Activated CD4-positive, alpha-beta T cell treated with anti-CD3 and anti-CD28 coated beads, Interleukin-2, amount 10 ng/mL, durations not matched to agents 24 days and 14 days (primary cell): ENCODE measurements at regions of chr1 and their contacts with region 1.

Region 1: DNA sequence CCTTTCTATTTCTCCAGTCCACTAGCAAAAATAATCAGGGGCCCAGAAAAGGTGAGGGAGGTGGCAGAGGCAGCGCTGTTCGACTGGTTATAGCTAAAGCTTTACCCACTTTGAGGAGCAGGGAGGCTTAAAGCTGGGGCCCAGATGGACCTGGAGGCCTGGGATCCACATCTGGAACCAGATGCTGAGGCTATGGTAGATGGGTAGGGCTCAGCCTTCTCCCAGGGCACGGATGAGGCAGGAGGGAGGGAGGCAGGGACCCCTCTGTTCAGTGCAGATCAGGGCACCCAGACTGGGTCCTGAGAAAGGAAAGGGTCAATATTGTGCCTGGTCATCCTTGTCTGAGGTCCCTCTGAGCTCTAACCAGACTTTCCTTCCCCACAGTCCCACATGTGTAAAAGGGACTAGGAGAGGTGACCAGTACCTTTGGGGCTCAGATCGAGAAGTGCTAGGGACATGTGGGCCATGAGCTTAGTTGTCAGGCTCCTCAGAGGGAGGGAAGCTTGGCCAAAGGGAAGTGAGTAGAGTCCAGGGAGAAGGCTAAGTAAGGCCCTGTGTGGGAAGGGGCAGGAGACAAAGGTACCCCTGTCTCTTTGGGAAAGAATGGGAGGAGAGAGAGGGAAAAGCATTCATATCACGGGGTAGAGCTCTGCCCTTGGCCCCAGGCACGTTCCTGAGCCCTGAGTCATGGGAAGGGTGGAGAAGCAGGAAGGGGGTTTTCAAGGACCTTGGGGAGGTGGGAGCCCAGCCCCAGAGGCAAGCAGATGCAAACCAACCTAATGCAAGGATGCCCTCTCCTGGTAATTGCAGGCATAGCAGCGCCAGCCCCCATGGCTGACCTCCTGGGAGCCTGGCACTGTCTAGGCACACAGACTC is 15.4 kb downstream of the LMNA start:
- DNase-seq: peak; percentile 94
- H3K4me3 Mint-ChIP-seq: no peak overlapping the region
- H3K27ac Mint-ChIP-seq: peak overlapping the region; percentile 64
- H3K4me1 Mint-ChIP-seq: peaks cover 42% of the 10 kb centered on the region
- H3K27me3 Mint-ChIP-seq: peaks cover 4% of the 10 kb centered on the region

Region 2: GRCh38 chr1:155989242-155990004 is 140.5 kb before region 1 on chr1:
- intact Hi-C with region 1: no loop called
- DNase-seq: peak; percentile 95
- H3K4me3 Mint-ChIP-seq: no peak overlapping the region
- H3K27ac Mint-ChIP-seq: no peak overlapping the region
- H3K4me1 Mint-ChIP-seq: peaks cover 16% of the 10 kb centered on the region
- H3K27me3 Mint-ChIP-seq: no peaks in the 10 kb centered on the region

Region 3: GRCh38 chr1:156090822-156091188 is 39.1 kb before region 1 on chr1:
- intact Hi-C with region 1: loop called (anchors 1 kb)
- DNase-seq: peak; percentile 95
- H3K4me3 Mint-ChIP-seq: no peak overlapping the region
- H3K27ac Mint-ChIP-seq: no peak overlapping the region
- H3K4me1 Mint-ChIP-seq: peaks cover 5% of the 10 kb centered on the region
- H3K27me3 Mint-ChIP-seq: peaks cover 41% of the 10 kb centered on the region

Region 4: GRCh38 chr1:156096640-156097391 is 33.1 kb before region 1 on chr1:
- intact Hi-C with region 1: loop called (anchors 1 kb)
- DNase-seq: peak; percentile 94
- H3K4me3 Mint-ChIP-seq: peak overlapping the region; percentile 47
- H3K27ac Mint-ChIP-seq: peak overlapping the region; percentile 97
- H3K4me1 Mint-ChIP-seq: peaks cover 46% of the 10 kb centered on the region
- H3K27me3 Mint-ChIP-seq: peaks cover 34% of the 10 kb centered on the region

Region 5: DNA sequence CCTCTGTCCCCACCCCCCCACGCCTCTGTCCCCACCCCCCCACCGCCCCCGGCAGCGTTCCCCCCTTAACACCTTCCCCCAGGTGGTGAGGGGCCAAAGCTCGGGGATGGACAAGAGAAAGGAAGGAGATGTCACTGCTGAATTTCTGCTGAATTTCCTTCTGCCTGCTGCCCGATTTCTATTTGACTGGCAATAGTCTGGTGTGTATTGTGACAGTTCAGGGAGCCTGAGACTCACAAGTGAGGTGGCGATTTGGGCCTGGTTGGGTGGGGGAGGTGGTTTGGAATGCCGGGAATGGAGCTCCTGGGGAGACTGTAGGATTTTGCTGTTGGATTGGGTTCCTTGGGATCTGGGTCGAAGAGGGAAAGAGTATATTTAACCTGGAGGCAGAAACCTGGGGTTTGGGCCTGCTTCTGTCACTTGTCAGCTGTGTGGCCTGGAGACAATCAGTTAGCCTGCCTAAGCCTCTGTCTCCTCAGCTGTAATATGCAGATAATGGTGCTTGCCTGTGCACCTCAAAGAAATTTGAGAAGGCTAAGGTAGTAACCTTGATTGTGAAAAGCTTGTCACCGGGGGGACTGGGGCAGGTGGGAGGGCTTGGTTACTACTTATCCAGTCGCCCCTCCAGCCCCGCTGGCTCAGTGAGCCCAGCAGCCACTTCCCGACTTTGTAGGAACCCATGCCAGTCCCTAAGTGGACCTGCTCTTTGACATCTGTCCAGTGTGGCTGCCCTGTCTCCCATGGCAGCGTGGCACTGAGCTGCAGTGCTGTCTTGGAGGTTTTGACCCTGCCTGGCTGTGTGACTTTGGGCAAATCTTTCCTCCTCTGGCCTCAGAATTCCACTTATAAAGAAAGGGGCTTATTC is 23.1 kb before region 1 on chr1:
- intact Hi-C with region 1: loop called (anchors 1 kb)
- DNase-seq: no peak
- H3K4me3 Mint-ChIP-seq: peak overlapping the region; percentile 72
- H3K27ac Mint-ChIP-seq: peak overlapping the region; percentile 96
- H3K4me1 Mint-ChIP-seq: peaks cover 45% of the 10 kb centered on the region
- H3K27me3 Mint-ChIP-seq: peaks cover 33% of the 10 kb centered on the region

Region 6: DNA sequence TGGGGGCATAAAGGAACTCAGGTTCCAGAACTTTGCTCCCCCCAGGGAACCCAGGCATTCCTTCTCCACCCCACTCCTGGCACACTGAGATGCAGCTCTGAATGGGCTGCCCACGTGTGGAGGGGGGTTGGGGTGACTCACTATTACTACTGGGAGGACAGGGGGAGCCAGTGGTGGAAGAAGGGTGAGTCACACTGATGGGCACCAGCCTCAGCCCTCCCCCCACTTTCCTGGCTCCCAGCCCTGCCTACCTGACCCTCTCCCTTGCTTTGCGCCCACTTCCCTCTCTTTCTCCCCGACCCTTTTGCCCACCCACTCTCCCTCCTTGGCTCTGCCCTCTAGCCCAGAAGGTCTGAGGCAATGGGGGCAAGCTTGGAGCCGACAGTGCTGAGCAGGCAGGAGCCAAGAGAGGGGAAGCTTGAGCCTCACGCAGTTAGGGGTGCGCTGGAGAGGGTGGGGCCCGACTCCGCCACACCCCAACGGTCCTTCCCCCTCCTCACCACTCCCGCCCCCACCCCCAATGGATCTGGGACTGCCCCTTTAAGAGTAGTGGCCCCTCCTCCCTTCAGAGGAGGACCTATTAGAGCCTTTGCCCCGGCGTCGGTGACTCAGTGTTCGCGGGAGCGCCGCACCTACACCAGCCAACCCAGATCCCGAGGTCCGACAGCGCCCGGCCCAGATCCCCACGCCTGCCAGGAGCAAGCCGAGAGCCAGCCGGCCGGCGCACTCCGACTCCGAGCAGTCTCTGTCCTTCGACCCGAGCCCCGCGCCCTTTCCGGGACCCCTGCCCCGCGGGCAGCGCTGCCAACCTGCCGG is 15.6 kb before region 1 on chr1 and contains the start of gene LMNA:
- intact Hi-C with region 1: loop called (anchors 1 kb)
- DNase-seq: peak; percentile 88
- H3K4me3 Mint-ChIP-seq: peak within 1 kb of the TSS; percentile 92
- H3K27ac Mint-ChIP-seq: peak within 1 kb of the TSS; percentile 81
- H3K4me1 Mint-ChIP-seq: peaks cover 28% of the 10 kb centered on the region
- H3K27me3 Mint-ChIP-seq: peaks cover 45% of the 10 kb centered on the region
- total RNA-seq, gene LMNA: 105 and 110 TPM in 2 replicates

Region 7: DNA sequence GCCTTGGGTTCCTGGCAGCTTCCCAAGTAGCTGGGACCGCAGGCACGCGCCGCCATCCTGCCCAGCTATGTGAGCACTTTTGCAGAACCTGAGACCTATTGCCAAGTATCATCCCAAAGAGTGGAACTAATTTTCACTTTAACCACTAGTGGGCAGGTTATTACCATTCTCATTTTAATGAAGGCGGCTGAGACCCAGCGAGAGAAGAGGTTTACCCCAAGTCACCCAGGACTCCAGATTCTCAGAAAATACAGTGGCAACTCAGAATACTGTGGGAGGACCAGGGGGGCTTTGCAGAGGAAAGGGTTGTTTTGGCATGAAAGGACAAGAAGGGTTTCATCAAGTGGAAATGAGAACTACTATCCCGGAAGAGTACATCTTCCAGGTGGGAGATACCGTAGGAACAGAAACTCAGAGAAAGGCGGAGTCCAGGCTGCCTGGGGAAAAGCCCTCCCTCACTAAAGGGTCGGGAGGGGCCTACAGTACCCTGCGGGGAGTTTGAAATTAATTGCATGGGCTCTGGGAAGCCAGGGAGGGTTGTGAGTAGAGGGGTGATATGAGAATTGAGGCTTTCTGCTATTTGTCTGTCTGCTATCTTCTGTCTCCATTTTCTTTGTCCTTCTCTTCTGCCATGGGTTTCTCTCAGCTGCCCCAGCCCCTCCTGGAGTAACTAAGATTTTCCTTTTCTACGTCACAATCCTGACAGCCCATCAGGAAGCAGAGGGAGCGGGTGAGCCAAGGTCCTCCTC is 16.2 kb after region 1 on chr1:
- intact Hi-C with region 1: loop called (anchors 1 kb)
- DNase-seq: peak; percentile 84
- H3K4me3 Mint-ChIP-seq: peak overlapping the region; percentile 61
- H3K27ac Mint-ChIP-seq: peak overlapping the region; percentile 90
- H3K4me1 Mint-ChIP-seq: peaks cover 29% of the 10 kb centered on the region
- H3K27me3 Mint-ChIP-seq: no peaks in the 10 kb centered on the region